H1 (cell line): ENCODE measurements at regions of chr1 and their contacts with region 1.

Region 1: DNA sequence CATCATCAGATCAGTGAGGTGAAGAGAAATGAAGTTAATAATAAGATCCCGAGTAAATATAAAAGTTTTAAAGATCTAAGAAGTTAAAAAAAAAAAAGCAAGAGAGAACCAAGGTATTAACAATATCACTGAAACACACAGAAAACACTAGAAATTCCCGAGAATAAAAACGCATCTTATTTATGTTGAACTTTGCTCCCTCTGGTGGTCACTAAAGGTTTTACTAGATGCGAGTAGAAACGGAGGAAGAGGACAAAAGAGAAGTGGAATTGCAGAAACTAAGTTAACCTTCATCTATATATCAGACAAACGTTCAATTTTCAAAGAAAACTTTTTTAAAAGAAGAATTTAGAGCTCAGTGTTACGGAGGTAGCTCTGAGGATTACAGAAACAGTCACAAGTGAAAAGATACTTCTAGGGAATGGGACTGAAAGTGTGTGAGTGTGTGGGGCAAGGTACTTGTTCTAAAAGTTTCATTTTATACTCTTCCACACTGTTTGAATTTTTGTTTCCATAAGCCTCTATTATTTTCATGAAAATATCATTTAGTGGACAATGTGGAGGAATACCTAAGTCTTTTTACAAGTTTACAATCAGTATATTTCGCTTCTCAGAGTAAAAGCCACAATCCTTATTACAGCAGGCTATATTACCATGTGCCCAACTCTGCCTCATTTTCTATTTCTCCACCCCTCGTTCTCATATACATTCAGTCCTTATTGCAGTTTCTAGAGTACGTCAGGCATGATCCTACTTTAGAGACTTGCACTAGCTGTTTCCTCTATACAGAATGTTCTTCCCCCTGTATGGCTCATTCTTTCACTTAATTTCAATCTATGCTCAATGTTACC is 19.7 kb downstream of the ACBD6 start:
- DNase-seq: no peak
- H3K4me3 ChIP-seq: no peak overlapping the region
- H3K27ac ChIP-seq: no peak overlapping the region
- H3K4me1 ChIP-seq: peaks cover 0 to 5% (median 1%) of the 10 kb centered on the region in 4 experiments; a peak in 3 of 7 replicates
- H3K27me3 ChIP-seq: no peaks in the 10 kb centered on the region
- CTCF ChIP-seq: peak in 2 of 3 experiments; percentile 27 to 54; a peak in 2 of 4 replicates
- EP300 ChIP-seq: no peak
- POLR2A ChIP-seq: no peak
- RAD21 ChIP-seq: peak; percentile 33; a peak in 3 of 4 replicates

Region 2: DNA sequence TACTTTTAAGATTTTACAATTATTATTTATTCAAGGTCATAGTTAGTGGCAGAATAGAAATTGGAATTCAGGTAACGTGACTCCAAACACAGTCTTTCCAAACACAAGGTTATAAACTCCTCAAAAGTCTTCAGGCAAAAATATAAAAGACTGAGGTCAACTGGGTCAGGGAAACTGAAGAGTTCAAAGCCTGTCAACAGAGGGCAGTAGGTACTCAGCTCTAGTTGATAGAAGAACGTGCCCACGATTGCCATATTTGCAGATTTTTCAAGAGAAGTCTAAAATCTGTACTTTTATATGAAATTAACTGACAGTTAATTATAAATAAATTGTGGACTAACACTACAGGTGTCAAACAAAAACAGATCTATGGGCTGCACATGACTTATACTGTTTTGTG is 117.6 kb before region 1 on chr1:
- CTCF ChIA-PET with region 1: interaction called, 25 read pairs
- POLR2A ChIA-PET with region 1: no interaction called
- DNase-seq: no peak
- H3K4me3 ChIP-seq: no peak overlapping the region
- H3K27ac ChIP-seq: no peak overlapping the region
- H3K4me1 ChIP-seq: peaks cover 2 to 11% (median 3%) of the 10 kb centered on the region in 4 experiments; a peak in 6 of 7 replicates
- H3K27me3 ChIP-seq: no peaks in the 10 kb centered on the region
- CTCF ChIP-seq: peak in 2 of 3 experiments; percentile 63 to 71; a peak in 3 of 4 replicates
- EP300 ChIP-seq: no peak
- POLR2A ChIP-seq: no peak
- RAD21 ChIP-seq: peak; percentile 64 to 76

Region 3: GRCh38 chr1:180468311-180468710 is 14.3 kb before region 1 on chr1:
- CTCF ChIA-PET with region 1: interaction called, 21 read pairs
- POLR2A ChIA-PET with region 1: no interaction called
- DNase-seq: no peak
- H3K4me3 ChIP-seq: no peak overlapping the region
- H3K27ac ChIP-seq: no peak overlapping the region
- H3K4me1 ChIP-seq: no peaks in the 10 kb centered on the region
- H3K27me3 ChIP-seq: no peaks in the 10 kb centered on the region
- CTCF ChIP-seq: no peak
- EP300 ChIP-seq: no peak
- POLR2A ChIP-seq: no peak
- RAD21 ChIP-seq: no peak

Region 4: GRCh38 chr1:180502360-180503273 is 20.0 kb after region 1 on chr1 and contains the start of gene ACBD6:
- CTCF ChIA-PET with region 1: interaction called, 25 read pairs
- POLR2A ChIA-PET with region 1: interaction called, 5 read pairs
- DNase-seq: peak; percentile 54 to 95
- H3K4me3 ChIP-seq: peak within 1 kb of the TSS; percentile 74 to 95 (median 78)
- H3K27ac ChIP-seq: peak within 1 kb of the TSS; percentile 92
- H3K4me1 ChIP-seq: peaks cover 0 to 4% (median 1%) of the 10 kb centered on the region in 4 experiments; a peak in 2 of 7 replicates
- H3K27me3 ChIP-seq: peaks cover 0 to 4% (median 0%) of the 10 kb centered on the region in 4 experiments; a peak in 2 of 7 replicates
- CTCF ChIP-seq: peak in 2 of 3 experiments; percentile 7 to 24; a peak in 1 of 4 replicates
- EP300 ChIP-seq: 0 out of 3 replicates have a peak, but pooled peaks of 1 of the 2 experiments have one; percentile 27
- POLR2A ChIP-seq: peak in 1 of 2 experiments; percentile 87; a peak in 2 of 3 replicates
- RAD21 ChIP-seq: no peak
- total RNA-seq, gene ACBD6: 52.0 and 58.0 TPM in 2 replicates

Region 5: DNA sequence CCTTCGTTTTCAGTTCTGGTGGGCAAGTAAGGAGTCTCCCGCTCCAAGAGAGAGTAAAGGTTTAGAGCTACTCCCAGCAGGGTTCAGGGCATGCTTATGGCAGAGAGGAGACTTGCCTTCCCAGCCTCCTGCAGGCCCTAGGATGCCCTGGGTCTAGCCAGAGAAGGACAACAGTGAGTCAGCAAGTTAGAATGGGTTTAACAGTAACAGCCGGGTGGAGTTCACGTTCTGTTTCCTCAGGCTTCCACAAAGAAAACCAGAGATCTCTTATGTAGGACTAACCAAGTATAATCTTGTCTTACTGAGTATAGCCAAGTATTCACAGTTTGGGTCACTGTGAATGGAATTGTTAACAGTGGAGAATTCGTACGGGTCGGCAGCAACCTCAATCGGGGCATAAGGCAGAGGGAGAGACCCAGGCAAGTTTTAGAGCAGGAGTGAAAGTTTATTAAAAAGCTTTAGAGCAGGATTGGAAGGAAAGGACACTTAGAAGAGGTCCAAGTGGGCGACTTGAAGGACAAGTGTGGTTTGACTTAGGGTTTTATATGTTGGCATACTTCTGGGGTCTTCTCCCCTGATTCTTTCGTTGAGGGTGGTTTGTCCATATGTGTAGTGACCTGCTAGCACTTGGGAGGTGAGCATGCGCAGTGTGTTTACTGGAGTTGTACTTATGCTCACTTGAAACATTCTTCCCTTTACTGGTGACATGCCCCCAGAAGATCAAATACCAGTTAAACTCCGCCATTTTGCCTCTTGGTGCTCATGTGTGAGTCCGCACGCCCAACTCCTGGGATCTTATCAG is 80.6 kb after region 1 on chr1:
- CTCF ChIA-PET with region 1: no interaction called
- POLR2A ChIA-PET with region 1: no interaction called
- DNase-seq: no peak
- H3K4me3 ChIP-seq: no peak overlapping the region
- H3K27ac ChIP-seq: no peak overlapping the region
- H3K4me1 ChIP-seq: no peaks in the 10 kb centered on the region
- H3K27me3 ChIP-seq: no peaks in the 10 kb centered on the region
- CTCF ChIP-seq: no peak
- EP300 ChIP-seq: no peak
- POLR2A ChIP-seq: no peak
- RAD21 ChIP-seq: no peak